ENCODE measurements at regions of chr5 and their contacts with region 1.

Region 1: GRCh38 chr5:145825751-145826180 is 9.4 kb downstream of the PRELID2 start:
- DNase-seq: peak; percentile 25
- H3K4me3 ChIP-seq: no peak overlapping the region
- H3K27ac ChIP-seq: no peak overlapping the region
- H3K4me1 ChIP-seq: peaks cover 5% of the 10 kb centered on the region
- H3K27me3 ChIP-seq: no peaks in the 10 kb centered on the region
- CTCF ChIP-seq: peak; percentile 87 to 90

Region 2: DNA sequence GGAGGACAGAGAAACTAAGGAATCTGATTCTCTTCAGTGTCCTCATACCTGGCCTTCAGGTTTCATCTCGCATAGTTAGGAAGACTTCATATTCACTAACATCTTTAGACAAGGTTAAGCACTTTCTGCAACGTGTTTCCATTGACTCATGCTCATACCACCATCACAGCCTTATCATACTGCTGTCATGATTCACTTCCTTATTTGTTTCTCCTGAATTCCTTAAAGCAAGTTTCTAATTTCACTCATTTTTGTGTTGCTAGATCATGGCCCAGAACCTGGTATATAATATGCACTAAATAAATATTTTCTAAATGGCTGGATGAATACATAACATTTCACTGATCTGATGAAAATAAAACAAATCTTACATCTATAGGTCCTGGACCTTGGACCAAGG is 463.5 kb before region 1 on chr5:
- CTCF ChIA-PET with region 1: no interaction called
- dilution Hi-C with region 1: no loop called
- in situ Hi-C with region 1: no loop called
- intact Hi-C with region 1: loop called (anchors 10 kb)
- DNase-seq: peak; percentile 70
- H3K4me3 ChIP-seq: no peak overlapping the region
- H3K27ac ChIP-seq: peak overlapping the region; percentile 5
- H3K4me1 ChIP-seq: peaks cover 11% of the 10 kb centered on the region
- H3K27me3 ChIP-seq: no peaks in the 10 kb centered on the region
- CTCF ChIP-seq: no peak

Region 3: DNA sequence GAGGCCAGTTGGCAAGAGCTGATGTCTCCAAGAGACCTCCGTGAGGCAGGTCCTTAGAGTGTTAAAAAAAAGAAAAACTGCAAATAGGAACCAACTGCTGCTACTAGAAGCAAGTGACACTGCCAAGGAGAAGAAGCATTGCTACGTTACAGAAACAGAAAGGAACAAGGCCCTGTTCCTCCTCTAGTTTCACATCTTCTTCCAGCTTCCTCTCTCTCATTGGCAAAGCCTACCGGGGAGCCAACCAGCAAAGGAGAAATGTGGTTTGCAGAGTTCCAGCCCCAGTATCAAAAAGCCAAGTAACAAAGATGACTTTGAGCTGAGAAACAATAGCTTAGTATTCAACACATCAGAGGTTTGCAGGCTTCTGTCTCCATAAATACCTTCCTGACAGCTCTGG is 136.5 kb before region 1 on chr5:
- CTCF ChIA-PET with region 1: interaction called, 3 read pairs
- dilution Hi-C with region 1: no loop called
- in situ Hi-C with region 1: loop called (anchors 5 to 10 kb)
- intact Hi-C with region 1: no loop called
- DNase-seq: no peak
- H3K4me3 ChIP-seq: no peak overlapping the region
- H3K27ac ChIP-seq: no peak overlapping the region
- H3K4me1 ChIP-seq: no peaks in the 10 kb centered on the region
- H3K27me3 ChIP-seq: no peaks in the 10 kb centered on the region
- CTCF ChIP-seq: no peak

Region 4: DNA sequence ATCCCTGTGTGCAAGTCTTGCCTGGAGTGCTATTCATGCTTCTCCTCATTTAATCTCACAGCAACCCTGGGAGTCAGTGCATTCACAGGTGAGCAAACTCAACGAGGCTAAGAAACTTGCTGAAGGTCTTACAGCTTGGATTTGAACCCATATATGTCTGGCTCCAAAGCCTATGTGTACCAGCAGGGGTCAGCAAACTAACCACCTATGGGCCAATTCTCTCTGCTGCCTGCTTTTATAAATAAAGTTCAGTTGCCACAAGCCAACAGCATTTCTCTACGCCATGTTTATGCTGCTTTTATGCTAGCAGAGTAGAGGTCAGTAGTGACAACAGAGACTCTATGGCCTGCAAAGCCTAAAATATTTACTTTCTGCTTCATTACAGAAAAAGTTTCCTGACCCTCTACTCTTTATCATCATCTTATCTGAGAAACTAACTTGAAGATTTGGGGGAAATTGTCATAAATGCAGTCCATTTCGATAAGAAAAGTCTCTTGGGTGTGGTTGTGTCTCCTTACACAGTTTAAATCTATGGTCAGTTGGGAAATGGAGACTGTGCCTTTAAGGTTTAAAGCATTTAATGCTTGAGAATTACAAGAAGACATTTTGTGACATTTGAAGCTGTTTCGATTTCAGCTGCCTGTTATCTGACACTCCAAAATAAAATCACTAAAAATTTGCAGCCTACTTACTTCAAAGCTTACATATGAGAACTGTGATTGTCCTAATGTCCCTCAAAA is 128.3 kb before region 1 on chr5:
- CTCF ChIA-PET with region 1: no interaction called
- dilution Hi-C with region 1: no loop called
- in situ Hi-C with region 1: no loop called
- intact Hi-C with region 1: loop called (anchors 1 kb)
- DNase-seq: peak; percentile 19
- H3K4me3 ChIP-seq: no peak overlapping the region
- H3K27ac ChIP-seq: no peak overlapping the region
- H3K4me1 ChIP-seq: no peaks in the 10 kb centered on the region
- H3K27me3 ChIP-seq: no peaks in the 10 kb centered on the region
- CTCF ChIP-seq: peak; percentile 63 to 65

Region 5: GRCh38 chr5:146130440-146131045 is 304.8 kb after region 1 on chr5:
- CTCF ChIA-PET with region 1: no interaction called
- dilution Hi-C with region 1: no loop called
- in situ Hi-C with region 1: no loop called
- intact Hi-C with region 1: loop called (anchors 5 kb)
- DNase-seq: peak; percentile 1
- H3K4me3 ChIP-seq: no peak overlapping the region
- H3K27ac ChIP-seq: no peak overlapping the region
- H3K4me1 ChIP-seq: no peaks in the 10 kb centered on the region
- H3K27me3 ChIP-seq: no peaks in the 10 kb centered on the region
- CTCF ChIP-seq: peak; percentile 54 to 72

Measured in mammary epithelial cell (primary cell).